ENCODE measurements at regions of chr17 and their contacts with region 1.

Region 1: DNA sequence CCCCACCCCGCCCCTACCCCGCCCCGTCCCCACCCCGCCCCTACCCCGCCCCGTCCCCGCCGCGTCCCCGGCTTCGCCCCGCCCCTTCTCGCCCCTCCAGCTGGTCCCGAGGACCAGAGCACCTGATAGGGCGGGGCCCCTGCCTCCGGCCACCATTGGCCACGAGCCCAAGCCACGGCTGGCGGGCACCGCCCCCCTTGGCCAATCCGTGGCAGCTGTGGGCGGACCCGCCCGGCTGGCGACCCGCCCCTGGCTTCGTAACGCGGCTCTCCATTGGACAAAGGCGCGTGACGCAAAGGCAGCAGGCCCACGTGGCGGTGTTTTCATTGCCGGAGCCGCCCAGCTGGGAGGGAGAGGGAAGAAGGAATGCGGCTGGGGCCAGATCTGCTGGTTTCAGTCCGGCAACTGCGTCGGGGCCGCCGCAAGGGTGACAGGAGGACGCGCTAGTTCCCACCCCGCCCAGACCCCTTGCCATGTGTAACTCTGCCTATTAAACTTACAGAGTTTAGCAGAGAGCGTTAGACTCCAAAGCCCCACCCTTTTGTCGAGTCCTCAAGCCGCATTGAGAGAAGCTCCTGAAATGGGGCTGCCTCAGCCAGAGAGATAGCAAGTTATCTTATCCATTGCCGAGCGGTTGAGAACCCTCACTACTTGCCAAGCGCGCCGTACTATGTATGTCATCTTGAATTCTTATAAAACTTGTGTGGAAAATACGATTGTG is 403 bp upstream of the WIPI1 start:
- DNase-seq: peak; percentile 100
- ATAC-seq: peak; percentile 81
- H3K4me3 ChIP-seq: peak overlapping the region; percentile 65
- H3K27ac ChIP-seq: no peak overlapping the region
- H3K4me1 ChIP-seq: peaks cover 21% of the 10 kb centered on the region
- H3K27me3 ChIP-seq: no peaks in the 10 kb centered on the region
- CTCF ChIP-seq: no peak

Region 2: GRCh38 chr17:67707442-67707841 is 750.3 kb before region 1 on chr17:
- CTCF ChIA-PET with region 1: no interaction called
- POLR2A ChIA-PET with region 1: no interaction called
- intact Hi-C with region 1: no loop called
- DNase-seq: no peak
- ATAC-seq: no peak
- H3K4me3 ChIP-seq: no peak overlapping the region
- H3K27ac ChIP-seq: no peak overlapping the region
- H3K4me1 ChIP-seq: no peaks in the 10 kb centered on the region
- H3K27me3 ChIP-seq: no peaks in the 10 kb centered on the region
- CTCF ChIP-seq: no peak

Region 3: GRCh38 chr17:68035523-68036303 is 422.0 kb before region 1 on chr17 and contains the start of gene KPNA2:
- CTCF ChIA-PET with region 1: no interaction called
- POLR2A ChIA-PET with region 1: no interaction called
- intact Hi-C with region 1: loop called (anchors 5 kb)
- DNase-seq: peak; percentile 99
- ATAC-seq: peak; percentile 89
- H3K4me3 ChIP-seq: peak within 1 kb of the TSS; percentile 97
- H3K27ac ChIP-seq: peak within 1 kb of the TSS; percentile 66
- H3K4me1 ChIP-seq: peaks cover 24% of the 10 kb centered on the region
- H3K27me3 ChIP-seq: no peaks in the 10 kb centered on the region
- CTCF ChIP-seq: no peak
- total RNA-seq, gene KPNA2: 223 and 288 TPM in 2 replicates

Region 4: GRCh38 chr17:68247445-68248198 is 210.1 kb before region 1 on chr17 and contains the start of gene AMZ2:
- CTCF ChIA-PET with region 1: no interaction called
- POLR2A ChIA-PET with region 1: interaction called, 17 read pairs
- intact Hi-C with region 1: loop called (anchors 5 kb)
- DNase-seq: peak; percentile 97
- ATAC-seq: peak; percentile 98
- H3K4me3 ChIP-seq: peak within 1 kb of the TSS; percentile 89
- H3K27ac ChIP-seq: peak within 1 kb of the TSS; percentile 49
- H3K4me1 ChIP-seq: peaks cover 11% of the 10 kb centered on the region
- H3K27me3 ChIP-seq: no peaks in the 10 kb centered on the region
- CTCF ChIP-seq: no peak
- total RNA-seq, gene AMZ2: 81.1 and 88.5 TPM in 2 replicates

Region 5: GRCh38 chr17:68377862-68378770 is 79.6 kb before region 1 on chr17:
- CTCF ChIA-PET with region 1: no interaction called
- POLR2A ChIA-PET with region 1: no interaction called
- intact Hi-C with region 1: loop called (anchors 1 kb)
- DNase-seq: peak; percentile 71
- ATAC-seq: peak; percentile 57
- H3K4me3 ChIP-seq: peak overlapping the region; percentile 14; the same call in 1 of the 2 replicates
- H3K27ac ChIP-seq: peak overlapping the region; percentile 93
- H3K4me1 ChIP-seq: peaks cover 49% of the 10 kb centered on the region
- H3K27me3 ChIP-seq: no peaks in the 10 kb centered on the region
- CTCF ChIP-seq: no peak

Region 6: DNA sequence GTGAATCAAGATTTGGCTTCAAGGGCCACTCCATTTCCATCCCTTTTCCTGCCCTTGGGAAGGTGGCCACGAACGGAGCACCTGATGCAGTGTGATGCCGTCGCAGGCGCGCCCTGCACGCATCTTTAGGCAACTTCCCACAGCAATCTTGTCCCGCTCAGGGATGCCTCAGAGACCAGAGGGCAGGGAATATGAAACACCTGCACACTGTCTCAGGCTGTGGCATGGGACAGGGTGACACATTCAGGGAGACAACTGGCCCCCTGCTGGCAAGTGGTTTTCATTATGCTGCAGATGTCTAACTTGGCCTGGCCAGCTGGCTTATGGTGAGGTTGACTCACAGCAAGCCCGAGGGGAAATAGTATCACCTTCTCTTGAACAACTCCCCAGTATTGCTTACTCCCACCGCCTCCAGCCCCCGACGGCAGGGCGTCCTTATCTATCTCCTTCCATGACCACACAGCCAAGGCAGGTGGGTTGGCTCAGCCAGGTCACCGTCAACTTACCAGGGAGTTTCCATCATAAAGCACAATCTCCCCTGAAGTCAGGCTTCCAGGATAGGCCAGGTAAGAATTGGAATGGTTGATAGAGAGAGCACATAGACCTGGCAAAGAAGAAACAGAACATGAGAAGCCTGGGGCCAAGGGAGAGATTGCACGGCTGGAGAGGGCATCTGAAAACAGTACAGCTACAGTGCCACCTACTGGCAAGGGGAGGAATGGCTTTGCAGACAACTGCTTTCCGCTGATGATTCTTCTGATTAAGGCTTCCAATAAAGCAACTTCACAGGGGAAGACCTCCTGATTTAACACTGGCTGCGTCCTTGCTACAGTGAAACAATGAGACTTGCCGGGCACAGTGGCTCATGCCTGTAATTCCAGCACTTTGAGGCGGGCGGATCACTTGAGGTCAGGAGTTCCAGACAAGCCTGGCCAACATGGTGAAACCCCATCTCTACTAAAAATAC is 21.5 kb before region 1 on chr17:
- CTCF ChIA-PET with region 1: interaction called, 13 read pairs
- POLR2A ChIA-PET with region 1: no interaction called
- intact Hi-C with region 1: loop called (anchors 2 kb)
- DNase-seq: peak; percentile 89
- ATAC-seq: peak; percentile 85
- H3K4me3 ChIP-seq: peak overlapping the region; percentile 48; the same call in 1 of the 2 replicates
- H3K27ac ChIP-seq: peak overlapping the region; percentile 81
- H3K4me1 ChIP-seq: peaks cover 10% of the 10 kb centered on the region
- H3K27me3 ChIP-seq: no peaks in the 10 kb centered on the region
- CTCF ChIP-seq: peak; percentile 86

Region 7: DNA sequence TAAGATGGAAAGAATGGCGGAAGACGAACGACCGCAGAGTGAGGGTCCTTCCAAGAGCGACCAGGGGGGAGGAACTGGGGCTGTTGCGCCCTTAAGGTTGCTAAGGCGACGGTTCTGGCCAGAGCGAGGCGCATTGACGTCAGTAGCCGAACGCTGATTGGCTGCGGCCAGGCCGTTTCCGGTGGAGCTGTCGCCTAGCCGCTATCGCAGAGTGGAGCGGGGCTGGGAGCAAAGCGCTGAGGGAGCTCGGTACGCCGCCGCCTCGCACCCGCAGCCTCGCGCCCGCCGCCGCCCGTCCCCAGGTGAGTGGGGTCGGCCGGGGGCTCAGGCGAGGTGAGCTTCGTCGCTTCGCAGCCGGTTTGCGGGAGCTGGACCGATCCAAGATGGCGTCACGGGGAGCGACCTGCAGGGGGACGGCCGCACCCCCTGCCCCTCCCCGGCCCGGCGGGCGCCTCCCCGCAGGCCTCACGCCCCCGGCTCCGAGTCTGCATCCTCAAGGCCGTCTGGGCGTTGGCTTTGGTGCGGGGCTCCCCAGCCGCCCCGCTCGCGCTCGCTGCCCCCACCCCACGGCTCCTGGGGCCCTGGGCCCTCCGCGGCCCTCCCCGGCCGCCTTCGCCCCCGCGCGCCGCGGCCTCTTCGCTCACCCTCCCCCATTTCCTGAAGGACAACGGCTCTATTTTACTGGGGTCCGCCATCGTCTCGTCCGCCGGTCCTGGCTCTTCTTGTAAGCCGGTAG is 54.7 kb after region 1 on chr17 and contains the start of gene PRKAR1A:
- CTCF ChIA-PET with region 1: no interaction called
- POLR2A ChIA-PET with region 1: interaction called, 3 read pairs
- intact Hi-C with region 1: loop called (anchors 2 kb)
- DNase-seq: peak; percentile 97
- ATAC-seq: peak; percentile 78
- H3K4me3 ChIP-seq: peak within 1 kb of the TSS; percentile 86
- H3K27ac ChIP-seq: peak within 1 kb of the TSS; percentile 84
- H3K4me1 ChIP-seq: peaks cover 49% of the 10 kb centered on the region
- H3K27me3 ChIP-seq: no peaks in the 10 kb centered on the region
- CTCF ChIP-seq: no peak
- total RNA-seq, gene PRKAR1A: 208 and 214 TPM in 2 replicates

Measured in PC-3 (cell line).